ENCODE measurements at regions of chr19 and their contacts with region 1.

Region 1: GRCh38 chr19:9342610-9343304 is 18.8 kb downstream of the ZNF559 start:
- DNase-seq: no peak
- ATAC-seq: no peak
- H3K4me3 ChIP-seq: peak overlapping the region; percentile 12
- H3K27ac ChIP-seq: no peak overlapping the region
- H3K4me1 ChIP-seq: no peaks in the 10 kb centered on the region
- H3K27me3 ChIP-seq: no peaks in the 10 kb centered on the region

Region 2: GRCh38 chr19:8973501-8974091 is 369.2 kb before region 1 on chr19:
- intact Hi-C with region 1: no loop called
- DNase-seq: no peak
- ATAC-seq: no peak
- H3K4me3 ChIP-seq: no peak overlapping the region
- H3K27ac ChIP-seq: no peak overlapping the region
- H3K4me1 ChIP-seq: no peaks in the 10 kb centered on the region
- H3K27me3 ChIP-seq: no peaks in the 10 kb centered on the region

Region 3: GRCh38 chr19:9381367-9381785 is 38.6 kb after region 1 on chr19:
- intact Hi-C with region 1: loop called in 1 of 4 experiments (anchors 5 kb)
- DNase-seq: no peak
- ATAC-seq: no peak
- H3K4me3 ChIP-seq: peak overlapping the region; percentile 15
- H3K27ac ChIP-seq: no peak overlapping the region
- H3K4me1 ChIP-seq: no peaks in the 10 kb centered on the region
- H3K27me3 ChIP-seq: no peaks in the 10 kb centered on the region

Measured in right cardiac atrium (tissue), 5 donors.